Pancreas (tissue), 10 donors: ENCODE measurements at regions of chr12 and their contacts with region 1.

Region 1: GRCh38 chr12:96054244-96054610 is 18.8 kb upstream of the LTA4H start:
- DNase-seq: no peak
- ATAC-seq: peak in 2 of 4 donors; percentile 44 to 60
- H3K4me3 ChIP-seq: no peak overlapping the region
- H3K27ac ChIP-seq: peak overlapping the region in 2 of 4 donors; percentile 20 to 41
- H3K4me1 ChIP-seq: no peaks in the 10 kb centered on the region
- H3K27me3 ChIP-seq: no peaks in the 10 kb centered on the region
- CTCF ChIP-seq: no peak

Region 2: GRCh38 chr12:95896846-95897245 is 157.4 kb before region 1 on chr12:
- intact Hi-C with region 1: no loop called
- DNase-seq: no peak
- ATAC-seq: no peak
- H3K4me3 ChIP-seq: no peak overlapping the region
- H3K27ac ChIP-seq: no peak overlapping the region
- H3K4me1 ChIP-seq: no peaks in the 10 kb centered on the region
- H3K27me3 ChIP-seq: peaks cover 0 to 4% (median 0%) of the 10 kb centered on the region in 4 donors
- CTCF ChIP-seq: no peak

Region 3: DNA sequence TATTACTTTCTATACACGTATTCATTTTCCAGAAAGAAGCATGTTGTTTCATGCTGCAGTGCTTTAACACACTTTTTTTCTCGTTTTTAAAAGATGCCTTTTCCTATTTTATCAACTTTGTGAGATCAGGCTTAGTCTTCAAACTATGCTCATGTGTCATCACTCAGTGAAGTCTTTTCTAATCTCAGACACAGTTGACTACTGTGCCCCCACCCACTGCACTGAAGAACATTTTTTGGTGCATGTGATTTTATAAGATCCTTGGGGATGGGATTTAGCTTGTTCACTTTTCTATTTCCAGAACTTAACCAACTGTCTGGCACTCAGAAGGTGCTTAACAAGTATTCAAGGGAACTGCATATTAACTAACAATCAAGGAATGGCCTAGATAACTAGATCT is 260.5 kb after region 1 on chr12:
- intact Hi-C with region 1: no loop called
- DNase-seq: no peak
- ATAC-seq: no peak
- H3K4me3 ChIP-seq: no peak overlapping the region
- H3K27ac ChIP-seq: no peak overlapping the region
- H3K4me1 ChIP-seq: no peaks in the 10 kb centered on the region
- H3K27me3 ChIP-seq: no peaks in the 10 kb centered on the region
- CTCF ChIP-seq: no peak

Region 4: DNA sequence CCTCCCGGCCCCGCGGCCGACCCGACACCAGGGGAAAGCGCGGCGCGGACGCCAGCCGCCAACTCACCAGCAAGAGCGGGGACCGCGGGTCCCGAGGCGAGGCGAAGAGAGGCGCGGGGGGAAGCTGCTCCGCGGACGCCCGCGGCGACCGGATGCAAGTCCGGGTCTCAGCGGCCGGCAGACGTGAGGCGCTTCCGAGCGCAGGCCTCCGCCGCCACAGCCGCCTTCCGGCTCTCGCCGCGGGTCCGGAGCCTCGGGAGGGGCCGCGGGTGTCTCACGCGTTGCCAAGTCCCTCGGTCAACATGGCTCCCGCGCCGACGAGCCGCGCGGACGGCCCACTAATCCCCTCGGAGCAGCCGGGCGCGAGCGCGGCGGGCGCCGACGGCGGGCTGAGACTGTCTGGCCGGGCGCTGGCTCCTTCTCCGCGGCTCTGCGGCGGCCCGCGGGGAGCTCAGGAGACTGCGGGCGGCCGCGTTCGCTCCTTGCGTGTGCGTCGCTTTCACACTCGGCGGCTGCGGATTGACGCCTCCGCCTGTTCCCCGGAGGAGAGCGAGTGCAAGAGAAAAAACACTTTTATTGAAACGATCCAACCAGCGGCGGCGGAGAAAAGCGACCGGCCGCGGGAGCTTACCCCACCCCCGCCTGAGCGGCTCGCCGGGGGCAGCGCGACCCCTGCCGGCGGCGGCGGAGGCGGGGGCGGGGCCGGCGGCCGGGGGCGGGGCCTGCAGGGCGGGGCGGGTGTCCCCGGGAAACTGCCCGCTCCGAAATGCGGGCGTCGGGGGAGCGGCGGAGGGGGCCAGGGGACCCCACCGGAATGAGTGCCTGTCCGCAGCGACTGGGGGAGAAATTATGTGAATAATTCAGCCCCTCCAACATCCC is 345.9 kb after region 1 on chr12 and contains the start of gene CDK17:
- intact Hi-C with region 1: loop called in 1 of 3 experiments (anchors 10 kb)
- DNase-seq: peak; percentile 79 to 92 (median 86)
- ATAC-seq: peak; percentile 85 to 91 (median 87)
- H3K4me3 ChIP-seq: peak within 1 kb of the TSS; percentile 81 to 94 (median 88)
- H3K27ac ChIP-seq: peak within 1 kb of the TSS; percentile 96 to 99 (median 98)
- H3K4me1 ChIP-seq: peaks cover 4 to 27% (median 21%) of the 10 kb centered on the region in 3 donors
- H3K27me3 ChIP-seq: no peaks in the 10 kb centered on the region
- CTCF ChIP-seq: peak in 1 of 4 donors; percentile 19
- total RNA-seq, gene CDK17: 7.2 to 15.1 (median 9.2) TPM

Region 5: GRCh38 chr12:96501139-96501761 is 447.0 kb after region 1 on chr12:
- intact Hi-C with region 1: no loop called
- DNase-seq: peak in 1 of 6 donors; percentile 17
- ATAC-seq: peak in 3 of 4 donors; percentile 36 to 72 (median 69)
- H3K4me3 ChIP-seq: no peak overlapping the region
- H3K27ac ChIP-seq: peak overlapping the region in 1 of 4 donors; percentile 15
- H3K4me1 ChIP-seq: peaks cover 0 to 6% (median 0%) of the 10 kb centered on the region in 3 donors
- H3K27me3 ChIP-seq: no peaks in the 10 kb centered on the region
- CTCF ChIP-seq: no peak